Activated CD4-positive, alpha-beta memory T cell treated with anti-CD3 and anti-CD28 coated beads, Interleukin-2, amount 10 ng/mL, durations not matched to agents 7 days and 5 days (primary cell): ENCODE measurements at regions of chr4 and their contacts with region 1.

Region 1: DNA sequence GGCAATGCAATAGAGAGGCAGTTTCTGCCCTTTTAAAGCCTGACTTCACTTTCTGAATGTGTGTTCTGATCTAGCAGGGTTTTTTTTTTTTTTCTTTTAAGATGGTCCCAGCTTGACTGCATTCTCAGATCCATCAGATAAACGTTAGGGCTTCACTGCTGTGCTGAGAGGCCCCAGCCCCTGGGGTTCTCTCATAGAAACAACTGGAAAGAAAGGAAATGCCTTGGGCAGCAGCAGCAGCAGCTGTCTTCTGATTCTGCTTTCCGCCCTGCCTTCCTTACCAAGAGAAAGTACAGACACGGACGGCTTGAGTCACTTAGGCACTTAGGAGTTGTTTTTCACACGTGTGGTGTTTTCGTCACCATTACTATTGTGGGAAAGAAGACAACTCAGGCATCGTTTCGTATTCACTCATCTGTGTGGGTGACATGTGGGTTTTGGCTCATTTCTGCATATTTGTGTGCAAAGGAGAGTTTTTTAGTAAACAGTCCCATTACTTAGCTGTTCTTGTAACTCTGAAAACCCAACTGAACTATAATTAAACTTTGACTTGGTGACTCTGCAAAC is 172.0 kb downstream of the PTTG2 start:
- DNase-seq: peak; percentile 83
- H3K4me3 Mint-ChIP-seq: peak overlapping the region; percentile 54
- H3K27ac Mint-ChIP-seq: peak overlapping the region; percentile 91
- H3K4me1 Mint-ChIP-seq: peaks cover 78% of the 10 kb centered on the region
- H3K27me3 Mint-ChIP-seq: peaks cover 4% of the 10 kb centered on the region

Region 2: GRCh38 chr4:38069271-38069760 is 62.9 kb before region 1 on chr4:
- CTCF ChIA-PET with region 1: interaction called, 10 read pairs
- POLR2A ChIA-PET with region 1: interaction called, 12 read pairs
- DNase-seq: peak; percentile 31
- H3K4me3 Mint-ChIP-seq: no peak overlapping the region
- H3K27ac Mint-ChIP-seq: no peak overlapping the region
- H3K4me1 Mint-ChIP-seq: peaks cover 22% of the 10 kb centered on the region
- H3K27me3 Mint-ChIP-seq: no peaks in the 10 kb centered on the region

Region 3: GRCh38 chr4:38091636-38092035 is 40.6 kb before region 1 on chr4:
- CTCF ChIA-PET with region 1: interaction called, 5 read pairs
- POLR2A ChIA-PET with region 1: interaction called, 12 read pairs
- DNase-seq: no peak
- H3K4me3 Mint-ChIP-seq: no peak overlapping the region
- H3K27ac Mint-ChIP-seq: peak overlapping the region; percentile 42
- H3K4me1 Mint-ChIP-seq: peaks cover 27% of the 10 kb centered on the region
- H3K27me3 Mint-ChIP-seq: no peaks in the 10 kb centered on the region

Region 4: DNA sequence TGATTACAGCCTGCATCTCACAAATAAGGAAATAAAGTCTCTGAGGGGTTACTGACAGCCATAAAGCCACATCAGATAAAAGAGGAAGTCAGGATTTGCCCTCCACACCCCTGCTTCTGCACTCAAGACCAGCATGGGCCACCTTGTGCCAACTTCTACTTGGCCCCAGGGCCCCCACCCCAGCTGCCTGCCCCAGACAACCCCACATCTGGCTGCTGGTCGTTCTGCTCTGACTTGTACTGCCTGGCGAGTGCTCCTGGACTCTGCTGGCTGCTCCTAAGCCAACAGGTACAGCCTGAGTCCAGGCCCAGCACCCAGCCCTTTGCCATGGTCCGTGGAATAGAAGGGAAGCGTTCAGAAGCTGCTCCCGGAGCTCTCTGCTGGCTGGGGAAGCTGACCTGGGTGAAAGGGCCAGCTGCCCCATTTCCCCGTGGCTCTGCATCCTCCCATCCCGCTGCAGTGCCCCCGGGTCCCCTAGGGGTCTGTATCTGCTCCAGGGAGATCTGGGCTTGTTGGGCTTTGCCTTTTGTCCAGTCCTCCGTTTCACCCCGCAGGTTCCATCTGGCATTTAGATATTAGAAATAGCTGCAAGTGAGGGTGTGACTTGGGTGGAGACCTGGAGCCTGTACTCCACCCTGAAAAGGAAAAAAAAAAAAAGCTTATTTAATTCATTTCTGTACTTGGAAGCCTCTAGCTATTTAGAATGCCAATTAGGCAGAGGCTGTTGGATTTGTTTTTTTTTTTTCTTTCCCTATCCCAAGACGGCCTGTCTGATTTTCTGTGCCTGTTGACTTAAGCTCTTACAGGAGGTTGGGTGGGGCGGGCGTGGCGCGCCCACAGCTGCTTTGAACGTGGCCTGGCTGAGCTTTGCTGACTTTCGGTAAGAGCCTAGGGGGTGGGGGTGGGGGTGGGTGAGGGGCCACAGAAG is 22.8 kb after region 1 on chr4:
- CTCF ChIA-PET with region 1: interaction called, 27 read pairs
- POLR2A ChIA-PET with region 1: interaction called, 213 read pairs
- DNase-seq: peak; percentile 53
- H3K4me3 Mint-ChIP-seq: peak overlapping the region; percentile 22
- H3K27ac Mint-ChIP-seq: peak overlapping the region; percentile 75
- H3K4me1 Mint-ChIP-seq: peaks cover 57% of the 10 kb centered on the region
- H3K27me3 Mint-ChIP-seq: peaks cover 6% of the 10 kb centered on the region

Region 5: DNA sequence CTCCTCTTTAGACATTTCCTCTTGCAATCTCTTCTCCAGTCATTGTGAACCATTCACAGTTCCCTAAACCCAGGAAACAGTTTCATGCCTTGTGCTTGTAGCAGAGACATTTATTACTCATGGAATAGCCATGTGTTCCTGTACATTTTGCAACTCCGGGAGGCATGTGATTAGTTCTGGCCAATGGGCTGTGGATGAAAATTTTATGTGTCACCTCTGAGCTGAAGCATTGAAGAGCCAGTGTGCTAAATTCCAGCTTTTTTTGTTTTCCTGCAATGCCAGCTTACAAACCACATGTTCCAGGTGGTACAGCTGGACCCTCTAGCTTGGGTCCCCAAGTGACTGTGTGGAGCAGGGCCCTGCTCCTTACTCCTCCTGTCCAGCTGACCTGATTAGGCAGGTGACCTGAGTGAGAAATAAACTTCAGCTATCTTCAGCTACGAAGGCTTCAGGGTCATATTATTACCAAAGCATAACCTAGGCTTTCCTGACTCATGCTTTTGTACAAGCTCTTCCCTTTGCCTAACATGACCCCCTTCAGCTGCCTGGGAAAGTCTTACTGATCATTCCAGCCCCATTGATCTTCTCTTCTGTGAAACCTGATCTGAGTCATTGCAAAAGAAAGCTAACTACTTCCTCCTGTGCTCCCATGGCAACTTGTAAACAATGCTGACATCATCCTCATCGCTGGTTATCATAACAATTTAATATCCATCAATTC is 28.5 kb after region 1 on chr4:
- CTCF ChIA-PET with region 1: interaction called, 27 read pairs
- POLR2A ChIA-PET with region 1: interaction called, 213 read pairs
- DNase-seq: peak; percentile 57
- H3K4me3 Mint-ChIP-seq: no peak overlapping the region
- H3K27ac Mint-ChIP-seq: peak overlapping the region; percentile 48
- H3K4me1 Mint-ChIP-seq: peaks cover 71% of the 10 kb centered on the region
- H3K27me3 Mint-ChIP-seq: peaks cover 3% of the 10 kb centered on the region

Region 6: DNA sequence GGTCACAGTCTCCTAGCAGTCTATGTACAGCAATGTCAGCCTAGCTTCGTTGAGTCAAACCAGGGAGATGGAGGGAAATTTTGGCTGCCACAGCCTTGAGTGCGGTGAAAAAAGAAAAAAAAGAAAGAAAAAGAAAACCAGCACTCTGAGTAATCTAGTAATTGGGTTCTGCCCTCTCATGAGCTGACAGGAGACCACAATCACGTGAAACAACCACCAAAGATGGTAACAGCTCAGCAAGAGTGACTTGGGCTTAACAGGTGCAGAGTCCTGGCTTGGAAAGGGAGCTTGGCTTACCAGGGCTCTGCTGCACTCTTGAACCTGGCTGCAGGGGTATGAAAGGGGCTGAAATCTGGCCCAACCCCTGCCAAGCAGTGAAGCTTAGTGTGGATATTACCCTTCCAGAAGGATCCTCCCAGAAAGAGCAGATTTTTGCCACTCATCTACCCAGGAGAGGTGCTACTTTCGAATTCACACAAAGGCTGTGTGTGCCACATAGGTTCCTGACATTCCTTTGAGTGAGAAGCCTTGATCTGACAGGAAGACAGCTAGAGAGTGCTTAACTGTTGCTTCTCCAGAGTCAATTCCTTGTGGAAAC is 178.4 kb after region 1 on chr4:
- CTCF ChIA-PET with region 1: interaction called, 5 read pairs
- POLR2A ChIA-PET with region 1: interaction called, 13 read pairs
- DNase-seq: peak; percentile 82
- H3K4me3 Mint-ChIP-seq: peak overlapping the region; percentile 36
- H3K27ac Mint-ChIP-seq: peak overlapping the region; percentile 80
- H3K4me1 Mint-ChIP-seq: peaks cover 68% of the 10 kb centered on the region
- H3K27me3 Mint-ChIP-seq: peaks cover 43% of the 10 kb centered on the region